PC-3 (cell line): ENCODE measurements at regions of chrX and their contacts with region 1.

Region 1: GRCh38 chrX:13000301-13000811 is 25.4 kb downstream of the TMSB4X start:
- DNase-seq: peak; percentile 30
- ATAC-seq: no peak
- H3K4me3 ChIP-seq: peak overlapping the region; percentile 7; the same call in 1 of the 2 replicates
- H3K27ac ChIP-seq: peak overlapping the region; percentile 99
- H3K4me1 ChIP-seq: peaks cover 56% of the 10 kb centered on the region
- H3K27me3 ChIP-seq: no peaks in the 10 kb centered on the region
- CTCF ChIP-seq: no peak

Region 2: DNA sequence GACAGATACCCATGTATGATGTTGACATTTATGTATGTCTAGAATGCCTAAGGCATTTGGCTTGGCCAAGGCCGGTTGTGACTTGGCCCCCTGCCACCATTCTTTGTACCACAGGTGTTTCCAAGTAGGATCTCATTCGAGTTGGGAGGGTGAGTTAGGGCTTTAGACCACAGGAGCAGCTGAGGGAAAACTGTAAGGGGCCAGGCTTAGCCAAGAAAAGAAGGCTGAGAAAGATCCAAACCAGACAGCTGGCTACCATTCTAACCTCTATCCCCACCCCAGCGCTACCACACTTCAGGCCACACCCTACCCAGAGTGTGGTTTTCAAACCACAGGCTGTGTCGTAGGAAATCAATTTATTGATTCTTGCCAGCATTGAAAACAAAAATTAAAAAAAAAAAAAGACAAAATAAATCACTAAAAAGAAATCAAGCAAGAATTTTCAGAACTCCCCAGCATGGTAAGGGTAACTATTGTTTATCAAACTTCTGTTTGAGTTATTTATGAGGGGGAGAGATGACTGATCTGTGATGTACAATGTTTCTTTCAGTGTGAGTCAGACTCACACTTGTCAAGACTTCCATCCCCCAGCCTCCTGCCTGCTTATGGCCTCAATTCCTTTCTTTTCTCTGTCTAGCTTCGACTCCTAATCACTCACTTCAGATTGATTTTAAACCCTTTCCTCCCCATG is 15.6 kb before region 1 on chrX:
- CTCF ChIA-PET with region 1: no interaction called
- POLR2A ChIA-PET with region 1: interaction called, 11 read pairs
- intact Hi-C with region 1: loop called (anchors 2 kb)
- DNase-seq: peak; percentile 95
- ATAC-seq: peak; percentile 56
- H3K4me3 ChIP-seq: peak overlapping the region; percentile 34; the same call in 1 of the 2 replicates
- H3K27ac ChIP-seq: peak overlapping the region; percentile 97
- H3K4me1 ChIP-seq: peaks cover 45% of the 10 kb centered on the region
- H3K27me3 ChIP-seq: no peaks in the 10 kb centered on the region
- CTCF ChIP-seq: no peak

Region 3: GRCh38 chrX:13110433-13111324 is 110.3 kb after region 1 on chrX:
- CTCF ChIA-PET with region 1: no interaction called
- POLR2A ChIA-PET with region 1: no interaction called
- intact Hi-C with region 1: loop called (anchors 5 kb)
- DNase-seq: peak; percentile 91
- ATAC-seq: peak; percentile 84
- H3K4me3 ChIP-seq: no peak overlapping the region
- H3K27ac ChIP-seq: peak overlapping the region; percentile 96
- H3K4me1 ChIP-seq: peaks cover 35% of the 10 kb centered on the region
- H3K27me3 ChIP-seq: no peaks in the 10 kb centered on the region
- CTCF ChIP-seq: no peak